ENCODE measurements at regions of chr18 and their contacts with region 1.

Region 1: DNA sequence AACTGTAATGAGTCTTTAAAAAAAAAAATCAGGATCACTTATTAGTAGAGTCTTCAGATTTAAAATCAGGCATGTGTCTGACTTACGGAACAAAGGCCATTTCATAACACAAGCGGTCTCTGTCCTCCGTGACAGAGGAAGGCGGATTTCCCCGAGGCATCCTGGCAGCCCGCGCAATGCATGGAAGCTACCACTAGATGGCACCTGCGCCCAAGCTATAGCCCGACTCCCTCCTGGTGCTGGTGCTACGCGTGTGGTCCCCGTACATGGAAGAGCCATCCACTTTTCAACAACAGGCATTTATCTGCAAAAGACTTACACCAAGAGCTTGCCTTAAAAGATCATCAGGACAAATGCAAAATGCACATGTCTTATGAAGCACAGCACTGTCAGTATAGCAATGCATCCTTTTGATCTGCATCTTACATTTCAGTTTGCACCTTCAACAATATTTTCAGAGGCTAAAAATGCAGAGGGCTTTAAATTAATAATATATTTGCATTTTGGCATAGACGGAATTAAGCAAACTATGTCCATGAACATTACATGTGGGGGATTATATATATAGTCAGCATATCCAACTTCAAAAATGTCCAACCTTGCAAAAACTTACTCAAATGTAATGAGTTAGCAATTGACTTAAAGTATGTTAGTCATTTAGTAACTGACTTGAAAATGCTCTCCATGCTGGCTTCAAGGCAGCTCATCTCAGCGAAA is 96.0 kb downstream of the ZNF516 start:
- DNase-seq: peak in 5 of 6 donors; percentile 42 to 90 (median 73)
- ATAC-seq: peak; percentile 83 to 98 (median 95)
- H3K4me3 ChIP-seq: no peak overlapping the region
- H3K27ac ChIP-seq: no peak overlapping the region
- H3K4me1 ChIP-seq: no peaks in the 10 kb centered on the region
- H3K27me3 ChIP-seq: no peaks in the 10 kb centered on the region
- CTCF ChIP-seq: peak; percentile 71 to 96 (median 94)

Region 2: GRCh38 chr18:76349067-76349715 is 49.9 kb before region 1 on chr18:
- intact Hi-C with region 1: no loop called
- DNase-seq: peak in 5 of 6 donors; percentile 41 to 78 (median 57)
- ATAC-seq: peak; percentile 75 to 89 (median 84)
- H3K4me3 ChIP-seq: peak overlapping the region in 2 of 4 donors; percentile 23 to 39
- H3K27ac ChIP-seq: no peak overlapping the region
- H3K4me1 ChIP-seq: peaks cover 5 to 9% (median 7%) of the 10 kb centered on the region in 3 donors
- H3K27me3 ChIP-seq: no peaks in the 10 kb centered on the region
- CTCF ChIP-seq: peak; percentile 72 to 75 (median 73)

Region 3: GRCh38 chr18:76491421-76491775 is 92.3 kb after region 1 on chr18:
- intact Hi-C with region 1: no loop called
- DNase-seq: peak; percentile 78 to 90 (median 88)
- ATAC-seq: peak; percentile 33 to 58 (median 46)
- H3K4me3 ChIP-seq: peak overlapping the region; percentile 52 to 75 (median 62)
- H3K27ac ChIP-seq: peak overlapping the region; percentile 64 to 88 (median 81)
- H3K4me1 ChIP-seq: peaks cover 6 to 23% (median 7%) of the 10 kb centered on the region in 3 donors
- H3K27me3 ChIP-seq: no peaks in the 10 kb centered on the region
- CTCF ChIP-seq: no peak

Region 4: DNA sequence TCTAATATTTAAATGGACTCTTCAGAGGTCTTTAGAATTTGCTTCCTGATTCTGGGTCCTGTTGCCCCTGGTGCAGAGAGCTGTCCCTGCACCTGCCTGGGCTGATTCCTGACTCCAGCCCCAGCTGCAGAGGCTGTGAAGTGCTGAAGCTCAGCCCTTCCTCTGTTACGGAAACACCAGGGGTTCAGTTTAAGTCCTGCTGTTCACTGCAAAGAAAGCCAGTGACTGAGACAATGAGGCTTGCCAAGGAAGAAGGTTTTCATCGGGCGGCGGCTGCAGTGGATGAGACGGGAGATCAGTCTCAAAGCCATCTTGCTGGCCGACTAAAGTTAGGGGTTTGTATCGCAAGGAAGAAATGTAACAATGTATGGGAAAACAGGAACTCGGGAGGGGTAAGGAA is 280.9 kb after region 1 on chr18:
- intact Hi-C with region 1: loop called in 2 of 3 experiments (anchors 5 kb)
- DNase-seq: no peak
- ATAC-seq: no peak
- H3K4me3 ChIP-seq: no peak overlapping the region
- H3K27ac ChIP-seq: no peak overlapping the region
- H3K4me1 ChIP-seq: no peaks in the 10 kb centered on the region
- H3K27me3 ChIP-seq: no peaks in the 10 kb centered on the region
- CTCF ChIP-seq: no peak

Region 5: GRCh38 chr18:76686737-76687262 is 287.7 kb after region 1 on chr18:
- intact Hi-C with region 1: loop called in 2 of 3 experiments (anchors 5 kb)
- DNase-seq: peak in 4 of 6 donors; percentile 29 to 70 (median 42)
- ATAC-seq: peak; percentile 87 to 96 (median 92)
- H3K4me3 ChIP-seq: no peak overlapping the region
- H3K27ac ChIP-seq: peak overlapping the region in 1 of 4 donors; percentile 24
- H3K4me1 ChIP-seq: no peaks in the 10 kb centered on the region
- H3K27me3 ChIP-seq: peaks cover 0 to 10% (median 0%) of the 10 kb centered on the region in 4 donors
- CTCF ChIP-seq: peak; percentile 16 to 43 (median 41)

Region 6: DNA sequence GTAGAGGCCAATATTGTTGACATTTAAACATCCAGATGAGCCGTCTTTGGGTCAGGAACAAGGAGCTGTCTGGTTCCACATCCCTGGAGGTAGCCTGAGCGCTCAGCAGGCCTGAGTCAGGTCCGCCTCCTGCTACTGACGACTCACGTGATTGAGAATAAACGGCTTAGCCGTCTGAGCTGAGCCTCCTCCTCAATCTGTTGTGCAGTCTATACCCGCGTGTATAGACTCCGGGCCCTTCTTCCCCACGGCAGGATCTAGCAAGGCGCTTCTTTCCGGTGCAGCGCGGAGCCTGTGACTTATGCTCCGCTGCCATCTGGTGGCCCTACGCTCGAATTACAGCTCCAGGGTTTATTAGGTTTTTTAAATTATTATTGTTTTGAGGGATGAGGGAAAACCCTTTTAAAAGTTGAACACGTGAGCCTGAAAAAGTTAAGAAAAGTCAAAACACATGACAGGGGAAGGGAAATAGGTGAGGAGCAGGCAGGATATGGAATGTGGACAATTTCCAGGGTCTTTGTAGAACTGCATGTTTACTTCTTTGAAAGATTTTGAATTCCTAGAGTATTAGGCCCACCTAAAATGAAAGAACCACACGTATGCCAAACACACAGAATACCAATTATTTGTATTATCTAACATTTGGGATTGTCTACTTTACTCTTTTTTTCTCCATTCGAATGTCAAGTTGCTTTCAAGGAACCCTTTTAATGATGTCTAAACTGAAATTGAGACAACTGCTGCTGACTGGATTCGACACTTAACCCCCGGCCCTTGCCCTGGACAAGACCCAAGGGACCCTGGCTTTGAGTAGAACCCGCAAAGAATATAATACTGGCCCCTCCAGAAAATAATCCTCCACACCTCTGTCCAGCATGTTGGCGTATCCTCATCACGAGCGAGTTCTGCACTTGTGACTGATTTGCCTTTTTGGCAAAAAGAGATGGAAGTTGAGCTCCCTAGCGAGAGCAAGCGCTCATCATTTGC is 310.9 kb after region 1 on chr18:
- intact Hi-C with region 1: loop called (anchors 5 to 10 kb)
- DNase-seq: peak in 5 of 6 donors; percentile 9 to 76 (median 57)
- ATAC-seq: peak; percentile 73 to 98 (median 94)
- H3K4me3 ChIP-seq: no peak overlapping the region
- H3K27ac ChIP-seq: no peak overlapping the region
- H3K4me1 ChIP-seq: no peaks in the 10 kb centered on the region
- H3K27me3 ChIP-seq: no peaks in the 10 kb centered on the region
- CTCF ChIP-seq: peak; percentile 63 to 83 (median 79)

Measured in pancreas (tissue), 10 donors.